ENCODE measurements at regions of chr21 and their contacts with region 1.

Region 1: GRCh38 chr21:17139720-17140119 is 373.1 kb upstream of the CXADR start:
- H3K4me3 Mint-ChIP-seq: peak overlapping the region; percentile 44
- H3K27ac Mint-ChIP-seq: no peak overlapping the region
- H3K4me1 Mint-ChIP-seq: no peaks in the 10 kb centered on the region
- H3K27me3 Mint-ChIP-seq: no peaks in the 10 kb centered on the region

Region 2: GRCh38 chr21:17045214-17045853 is 94.4 kb before region 1 on chr21:
- intact Hi-C with region 1: loop called (anchors 10 kb)
- H3K4me3 Mint-ChIP-seq: no peak overlapping the region
- H3K27ac Mint-ChIP-seq: no peak overlapping the region
- H3K4me1 Mint-ChIP-seq: no peaks in the 10 kb centered on the region
- H3K27me3 Mint-ChIP-seq: no peaks in the 10 kb centered on the region

Region 3: GRCh38 chr21:17185674-17186073 is 46.0 kb after region 1 on chr21:
- intact Hi-C with region 1: no loop called
- H3K4me3 Mint-ChIP-seq: no peak overlapping the region
- H3K27ac Mint-ChIP-seq: no peak overlapping the region
- H3K4me1 Mint-ChIP-seq: no peaks in the 10 kb centered on the region
- H3K27me3 Mint-ChIP-seq: no peaks in the 10 kb centered on the region